ENCODE measurements at regions of chr19 and their contacts with region 1.

Region 1: GRCh38 chr19:48872182-48872883 is at the start of gene PPP1R15A:
- DNase-seq: peak; percentile 99
- H3K4me3 Mint-ChIP-seq: peak within 1 kb of the TSS; percentile 95
- H3K27ac Mint-ChIP-seq: peak within 1 kb of the TSS; percentile 99
- H3K4me1 Mint-ChIP-seq: peaks cover 30% of the 10 kb centered on the region
- H3K27me3 Mint-ChIP-seq: peaks cover 2% of the 10 kb centered on the region
- total RNA-seq, gene PPP1R15A: 49.7 to 52.0 TPM

Region 2: GRCh38 chr19:48321622-48322591 is 550.4 kb before region 1 on chr19:
- CTCF ChIA-PET with region 1: no interaction called
- POLR2A ChIA-PET with region 1: no interaction called
- intact Hi-C with region 1: loop called (anchors 10 kb)
- DNase-seq: peak; percentile 99
- H3K4me3 Mint-ChIP-seq: peak overlapping the region; percentile 88
- H3K27ac Mint-ChIP-seq: peak overlapping the region; percentile 99
- H3K4me1 Mint-ChIP-seq: peaks cover 51% of the 10 kb centered on the region
- H3K27me3 Mint-ChIP-seq: no peaks in the 10 kb centered on the region

Region 3: GRCh38 chr19:48806818-48807589 is 65.3 kb before region 1 on chr19:
- CTCF ChIA-PET with region 1: no interaction called
- POLR2A ChIA-PET with region 1: interaction called, 6 read pairs
- intact Hi-C with region 1: loop called (anchors 2 kb)
- DNase-seq: no peak
- H3K4me3 Mint-ChIP-seq: no peak overlapping the region
- H3K27ac Mint-ChIP-seq: no peak overlapping the region
- H3K4me1 Mint-ChIP-seq: peaks cover 15% of the 10 kb centered on the region
- H3K27me3 Mint-ChIP-seq: no peaks in the 10 kb centered on the region

Region 4: GRCh38 chr19:48899781-48900476 is 27.6 kb after region 1 on chr19 and contains the start of gene NUCB1:
- CTCF ChIA-PET with region 1: interaction called, 4 read pairs
- POLR2A ChIA-PET with region 1: interaction called, 29 read pairs
- intact Hi-C with region 1: loop called (anchors 1 kb)
- DNase-seq: peak; percentile 100
- H3K4me3 Mint-ChIP-seq: peak within 1 kb of the TSS; percentile 96
- H3K27ac Mint-ChIP-seq: peak within 1 kb of the TSS; percentile 97
- H3K4me1 Mint-ChIP-seq: peaks cover 28% of the 10 kb centered on the region
- H3K27me3 Mint-ChIP-seq: peaks cover 7% of the 10 kb centered on the region
- total RNA-seq, gene NUCB1: 154 to 159 TPM

Region 5: DNA sequence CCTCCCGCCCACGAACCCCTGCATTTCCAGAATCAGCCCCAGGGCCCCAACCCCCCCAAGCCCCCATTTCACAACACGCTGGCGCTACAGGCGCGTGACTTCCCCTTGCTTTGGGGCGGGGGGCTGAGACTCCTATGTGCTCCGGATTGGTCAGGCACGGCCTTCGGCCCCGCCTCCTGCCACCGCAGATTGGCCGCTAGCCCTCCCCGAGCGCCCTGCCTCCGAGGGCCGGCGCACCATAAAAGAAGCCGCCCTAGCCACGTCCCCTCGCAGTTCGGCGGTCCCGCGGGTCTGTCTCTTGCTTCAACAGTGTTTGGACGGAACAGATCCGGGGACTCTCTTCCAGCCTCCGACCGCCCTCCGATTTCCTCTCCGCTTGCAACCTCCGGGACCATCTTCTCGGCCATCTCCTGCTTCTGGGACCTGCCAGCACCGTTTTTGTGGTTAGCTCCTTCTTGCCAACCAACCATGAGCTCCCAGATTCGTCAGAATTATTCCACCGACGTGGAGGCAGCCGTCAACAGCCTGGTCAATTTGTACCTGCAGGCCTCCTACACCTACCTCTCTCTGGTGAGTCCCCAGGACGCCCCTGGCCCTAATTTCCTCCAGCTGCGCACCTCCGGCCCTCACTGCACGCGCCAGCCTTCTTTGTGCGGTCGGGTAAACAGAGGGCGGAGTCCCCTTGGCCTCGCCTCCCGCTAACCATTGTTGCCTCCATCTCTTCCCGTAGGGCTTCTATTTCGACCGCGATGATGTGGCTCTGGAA is 92.9 kb after region 1 on chr19 and contains the start of gene FTL:
- CTCF ChIA-PET with region 1: interaction called, 3 read pairs
- POLR2A ChIA-PET with region 1: interaction called, 7 read pairs
- intact Hi-C with region 1: loop called (anchors 1 kb)
- DNase-seq: peak; percentile 95
- H3K4me3 Mint-ChIP-seq: peak within 1 kb of the TSS; percentile 89
- H3K27ac Mint-ChIP-seq: peak within 1 kb of the TSS; percentile 93
- H3K4me1 Mint-ChIP-seq: peaks cover 51% of the 10 kb centered on the region
- H3K27me3 Mint-ChIP-seq: no peaks in the 10 kb centered on the region
- total RNA-seq, gene FTL: 870 to 900 TPM

Region 6: GRCh38 chr19:48970923-48971395 is 98.6 kb after region 1 on chr19:
- CTCF ChIA-PET with region 1: interaction called, 15 read pairs
- POLR2A ChIA-PET with region 1: interaction called, 7 read pairs
- intact Hi-C with region 1: no loop called
- DNase-seq: peak; percentile 87
- H3K4me3 Mint-ChIP-seq: no peak overlapping the region
- H3K27ac Mint-ChIP-seq: no peak overlapping the region
- H3K4me1 Mint-ChIP-seq: peaks cover 21% of the 10 kb centered on the region
- H3K27me3 Mint-ChIP-seq: no peaks in the 10 kb centered on the region

Region 7: DNA sequence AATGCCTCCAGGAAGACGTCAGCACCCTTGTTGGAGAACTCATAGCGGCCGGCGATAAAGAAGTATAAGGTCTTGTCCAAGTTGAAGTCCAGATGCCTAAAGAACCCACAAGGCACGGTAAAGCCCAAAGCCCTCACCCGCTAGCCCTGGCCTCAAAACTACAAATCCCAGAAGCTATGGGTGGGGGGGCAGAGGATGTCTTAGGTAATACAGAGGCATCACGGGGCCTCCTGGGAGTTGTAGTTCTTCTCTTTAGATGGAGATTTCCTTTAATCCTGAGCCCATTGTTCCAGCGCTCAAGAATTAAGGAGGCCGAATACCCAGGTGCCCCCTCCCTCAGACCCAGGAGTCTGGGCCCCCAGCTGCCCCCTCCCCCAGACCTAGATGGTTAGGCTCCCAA is 109.9 kb after region 1 on chr19:
- CTCF ChIA-PET with region 1: no interaction called
- POLR2A ChIA-PET with region 1: no interaction called
- intact Hi-C with region 1: no loop called
- DNase-seq: no peak
- H3K4me3 Mint-ChIP-seq: no peak overlapping the region
- H3K27ac Mint-ChIP-seq: no peak overlapping the region
- H3K4me1 Mint-ChIP-seq: peaks cover 5% of the 10 kb centered on the region
- H3K27me3 Mint-ChIP-seq: no peaks in the 10 kb centered on the region

Measured in activated CD4-positive, alpha-beta memory T cell treated with anti-CD3 and anti-CD28 coated beads for 36 hours (primary cell).